ENCODE measurements at regions of chr2 and their contacts with region 1.

Region 1: DNA sequence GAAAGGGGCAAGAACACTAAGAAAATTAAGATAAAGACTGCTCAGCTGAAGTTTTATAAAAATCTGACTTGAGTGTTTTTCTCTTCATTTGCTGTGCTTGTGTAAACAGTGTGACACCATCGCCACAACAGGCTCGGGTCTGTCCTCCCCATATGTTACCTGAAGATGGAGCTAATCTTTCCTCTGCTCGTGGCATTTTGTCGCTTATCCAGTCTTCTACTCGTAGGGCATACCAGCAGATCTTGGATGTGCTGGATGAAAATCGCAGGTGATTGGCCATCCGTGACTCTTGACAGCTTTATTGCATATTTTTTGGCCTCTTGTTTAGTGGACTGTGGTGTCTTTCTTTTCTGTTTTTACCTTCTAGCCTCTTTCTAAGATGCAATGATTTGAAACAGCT is 22.1 kb downstream of the MFF start:
- DNase-seq: no peak
- ATAC-seq: no peak
- H3K4me3 Mint-ChIP-seq: no peak overlapping the region
- H3K27ac Mint-ChIP-seq: no peak overlapping the region
- H3K4me1 Mint-ChIP-seq: no peaks in the 10 kb centered on the region
- H3K27me3 Mint-ChIP-seq: no peaks in the 10 kb centered on the region

Region 2: GRCh38 chr2:227147023-227147422 is 200.1 kb before region 1 on chr2:
- CTCF ChIA-PET with region 1: no interaction called
- POLR2A ChIA-PET with region 1: no interaction called
- DNase-seq: no peak
- ATAC-seq: no peak
- H3K4me3 Mint-ChIP-seq: no peak overlapping the region
- H3K27ac Mint-ChIP-seq: no peak overlapping the region
- H3K4me1 Mint-ChIP-seq: no peaks in the 10 kb centered on the region
- H3K27me3 Mint-ChIP-seq: peaks cover 9% of the 10 kb centered on the region

Region 3: GRCh38 chr2:227335713-227336112 is 11.4 kb before region 1 on chr2:
- CTCF ChIA-PET with region 1: interaction called, 10 read pairs
- POLR2A ChIA-PET with region 1: interaction called, 3 read pairs
- DNase-seq: no peak
- ATAC-seq: no peak
- H3K4me3 Mint-ChIP-seq: no peak overlapping the region
- H3K27ac Mint-ChIP-seq: no peak overlapping the region
- H3K4me1 Mint-ChIP-seq: peaks cover 2% of the 10 kb centered on the region
- H3K27me3 Mint-ChIP-seq: no peaks in the 10 kb centered on the region

Region 4: DNA sequence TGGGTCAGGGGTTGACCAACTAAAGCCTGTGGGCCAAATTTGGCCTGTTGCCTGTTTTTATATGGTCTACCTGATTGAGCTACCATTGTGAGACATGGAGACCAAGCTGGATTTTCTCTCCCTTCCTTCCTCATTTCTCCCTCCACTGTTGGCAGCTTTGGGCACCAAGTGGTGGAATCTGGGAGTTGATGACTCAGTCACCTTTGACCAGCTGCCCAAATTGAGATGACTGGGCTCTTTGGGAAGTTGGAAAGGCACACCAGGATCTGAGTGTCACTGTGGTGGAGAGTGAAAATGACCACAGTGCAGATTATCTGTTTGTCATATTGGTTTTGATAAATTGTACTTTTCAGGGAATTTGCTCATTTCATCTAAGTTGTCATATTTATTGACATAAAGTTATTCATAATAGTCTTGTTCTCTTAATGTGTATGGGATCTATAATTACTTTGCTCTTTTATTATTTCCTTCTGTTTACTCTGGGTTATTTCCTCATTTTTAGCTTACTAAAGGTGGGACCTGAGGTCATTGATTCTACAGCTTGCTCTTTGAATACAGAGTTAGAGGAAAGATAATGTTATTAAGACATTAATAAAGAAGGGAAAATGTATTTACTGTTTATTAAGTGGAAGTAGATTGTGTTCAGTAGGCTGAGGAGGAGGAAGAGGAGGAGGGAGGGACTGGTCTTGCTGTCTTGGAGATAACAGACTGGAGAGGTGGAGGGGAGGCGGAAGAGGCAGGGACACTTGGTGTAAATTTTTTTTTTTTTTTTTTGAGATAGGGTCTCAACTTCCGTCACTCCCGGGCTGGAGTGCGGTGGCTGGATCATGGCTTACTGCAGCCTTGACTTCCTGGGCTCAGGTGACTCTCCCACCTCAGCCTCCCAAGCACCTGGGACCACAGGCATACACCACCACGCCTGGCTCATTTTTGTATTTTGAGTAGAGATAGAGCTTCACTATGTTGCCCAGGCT is 156.6 kb after region 1 on chr2:
- CTCF ChIA-PET with region 1: no interaction called
- POLR2A ChIA-PET with region 1: no interaction called
- DNase-seq: no peak
- ATAC-seq: no peak
- H3K4me3 Mint-ChIP-seq: no peak overlapping the region
- H3K27ac Mint-ChIP-seq: no peak overlapping the region
- H3K4me1 Mint-ChIP-seq: peaks cover 25% of the 10 kb centered on the region
- H3K27me3 Mint-ChIP-seq: no peaks in the 10 kb centered on the region

Measured in activated CD8-positive, alpha-beta T cell treated with anti-CD3 and anti-CD28 coated beads, Interleukin-2, amount 10 ng/mL, durations not matched to agents 7 days and 5 days (primary cell).